ENCODE measurements at regions of chr1 and their contacts with region 1.

Region 1: GRCh38 chr1:32321712-32322291 is 14.2 kb downstream of the MARCKSL1 start:
- DNase-seq: peak; percentile 81
- H3K4me3 Mint-ChIP-seq: peak overlapping the region; percentile 54
- H3K27ac Mint-ChIP-seq: peak overlapping the region; percentile 80
- H3K4me1 Mint-ChIP-seq: peaks cover 22% of the 10 kb centered on the region
- H3K27me3 Mint-ChIP-seq: no peaks in the 10 kb centered on the region
- CTCF ChIP-seq: no peak

Region 2: GRCh38 chr1:32179443-32180185 is 142.2 kb before region 1 on chr1 and contains the start of gene TXLNA:
- CTCF ChIA-PET with region 1: interaction called, 12 read pairs
- intact Hi-C with region 1: no loop called
- DNase-seq: peak; percentile 93
- H3K4me3 Mint-ChIP-seq: peak within 1 kb of the TSS; percentile 95
- H3K27ac Mint-ChIP-seq: peak within 1 kb of the TSS; percentile 96
- H3K4me1 Mint-ChIP-seq: peaks cover 23% of the 10 kb centered on the region
- H3K27me3 Mint-ChIP-seq: no peaks in the 10 kb centered on the region
- CTCF ChIP-seq: no peak
- total RNA-seq, gene TXLNA: 58.4 and 62.4 TPM in 2 replicates

Region 3: DNA sequence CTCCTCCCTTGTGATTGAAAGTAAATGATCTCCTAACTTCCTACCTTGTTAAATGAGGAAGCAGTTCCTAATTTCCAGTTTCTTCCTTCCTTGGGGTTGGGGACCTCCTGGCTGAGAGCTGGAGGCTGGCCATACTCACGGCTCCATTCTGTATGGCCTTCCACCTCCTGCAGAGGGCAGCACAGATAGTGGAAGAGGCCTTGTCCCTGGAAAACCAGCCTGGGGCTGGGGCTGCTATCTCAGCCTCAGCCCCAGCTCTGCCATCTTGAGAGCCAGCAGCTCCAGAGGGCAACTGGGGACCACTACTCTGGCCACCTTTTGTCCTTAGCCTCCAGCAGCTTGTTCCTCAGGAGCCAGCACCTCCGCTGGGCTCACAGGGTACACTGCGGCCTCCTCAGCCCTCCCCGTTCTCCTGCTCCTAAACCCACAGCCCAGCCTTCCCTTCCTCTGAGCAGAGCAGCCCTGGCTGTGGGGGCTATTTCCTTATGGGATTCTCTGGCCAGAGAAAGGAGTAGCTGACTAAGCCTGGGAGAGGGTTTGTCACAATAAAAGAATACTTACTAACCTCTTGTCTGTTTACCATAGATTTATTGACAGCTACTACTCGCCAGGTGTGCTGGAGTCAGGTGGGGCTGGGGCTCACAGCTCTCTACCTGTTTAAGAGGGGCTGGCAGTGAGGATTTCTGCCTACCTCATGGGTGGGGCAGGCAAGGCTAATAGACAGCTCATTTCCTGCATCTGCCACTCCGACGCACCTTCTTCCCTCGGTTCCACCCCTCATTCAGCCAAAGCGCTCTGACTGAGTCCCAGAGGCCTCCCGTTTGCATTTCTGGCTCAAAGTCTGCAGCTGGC is 105.9 kb before region 1 on chr1:
- CTCF ChIA-PET with region 1: interaction called, 12 read pairs
- intact Hi-C with region 1: no loop called
- DNase-seq: peak; percentile 74
- H3K4me3 Mint-ChIP-seq: no peak overlapping the region
- H3K27ac Mint-ChIP-seq: no peak overlapping the region
- H3K4me1 Mint-ChIP-seq: peaks cover 5% of the 10 kb centered on the region
- H3K27me3 Mint-ChIP-seq: no peaks in the 10 kb centered on the region
- CTCF ChIP-seq: peak; percentile 68

Region 4: GRCh38 chr1:32240140-32240951 is 81.5 kb before region 1 on chr1:
- CTCF ChIA-PET with region 1: interaction called, 15 read pairs
- intact Hi-C with region 1: loop called (anchors 5 kb)
- DNase-seq: peak; percentile 77
- H3K4me3 Mint-ChIP-seq: peak overlapping the region; percentile 88
- H3K27ac Mint-ChIP-seq: peak overlapping the region; percentile 64
- H3K4me1 Mint-ChIP-seq: no peaks in the 10 kb centered on the region
- H3K27me3 Mint-ChIP-seq: no peaks in the 10 kb centered on the region
- CTCF ChIP-seq: no peak

Region 5: GRCh38 chr1:32345289-32345827 is 23.6 kb after region 1 on chr1:
- CTCF ChIA-PET with region 1: interaction called, 10 read pairs
- intact Hi-C with region 1: no loop called
- DNase-seq: peak; percentile 28
- H3K4me3 Mint-ChIP-seq: no peak overlapping the region
- H3K27ac Mint-ChIP-seq: no peak overlapping the region
- H3K4me1 Mint-ChIP-seq: peaks cover 23% of the 10 kb centered on the region
- H3K27me3 Mint-ChIP-seq: peaks cover 13% of the 10 kb centered on the region
- CTCF ChIP-seq: no peak

Region 6: GRCh38 chr1:32372149-32372756 is 50.5 kb after region 1 on chr1:
- CTCF ChIA-PET with region 1: no interaction called
- intact Hi-C with region 1: no loop called
- DNase-seq: no peak
- H3K4me3 Mint-ChIP-seq: no peak overlapping the region
- H3K27ac Mint-ChIP-seq: no peak overlapping the region
- H3K4me1 Mint-ChIP-seq: no peaks in the 10 kb centered on the region
- H3K27me3 Mint-ChIP-seq: no peaks in the 10 kb centered on the region
- CTCF ChIP-seq: no peak

Measured in Calu3 (cell line).